Dorsolateral prefrontal cortex (tissue), 120 donors: ENCODE measurements at regions of chr11 and their contacts with region 1.

Region 1: GRCh38 chr11:90288212-90288821 is 65.5 kb upstream of the CHORDC1 start:
- DNase-seq: no peak
- H3K4me3 ChIP-seq: no peak overlapping the region
- H3K27ac ChIP-seq: no peak overlapping the region
- H3K27me3 ChIP-seq: peaks cover 0 to 3% (median 0%) of the 10 kb centered on the region in 45 donors
- CTCF ChIP-seq: peak; percentile 42 to 77 (median 61)

Region 2: DNA sequence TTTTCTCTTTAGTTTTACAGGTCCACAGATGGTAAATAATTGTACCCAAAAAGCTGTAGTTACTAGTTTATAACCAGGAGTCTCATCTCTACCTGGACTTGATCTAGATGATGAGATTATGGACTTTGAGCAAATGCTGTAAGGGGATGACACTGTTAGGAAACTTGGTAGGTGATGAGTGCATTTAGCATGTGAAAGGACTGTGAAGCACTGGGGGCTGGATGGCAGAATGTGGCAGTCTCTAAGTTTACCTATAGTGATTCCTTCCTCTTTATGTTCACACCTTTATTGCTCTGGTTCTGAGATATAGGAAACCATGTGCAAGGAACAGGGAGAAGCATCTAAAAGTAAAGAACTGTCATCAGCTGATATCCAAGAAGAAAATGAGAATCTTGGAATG is 165.2 kb after region 1 on chr11:
- intact Hi-C with region 1: loop called in 1 of 2 experiments (anchors 10 kb)
- DNase-seq: no peak
- H3K4me3 ChIP-seq: no peak overlapping the region
- H3K27ac ChIP-seq: no peak overlapping the region
- H3K27me3 ChIP-seq: no peaks in the 10 kb centered on the region
- CTCF ChIP-seq: no peak